Motor neuron (in vitro differentiated cells): ENCODE measurements at regions of chr7 and their contacts with region 1.

Region 1: GRCh38 chr7:78510580-78511188 is 712.1 kb downstream of the PHTF2 start:
- ATAC-seq: peak in 3 of 8 experiments; percentile 64 to 73 (median 69)
- H3K4me3 ChIP-seq: no peak overlapping the region
- H3K27ac ChIP-seq: no peak overlapping the region
- H3K4me1 ChIP-seq: peaks cover 8 to 14% of the 10 kb centered on the region in 2 donors

Region 2: DNA sequence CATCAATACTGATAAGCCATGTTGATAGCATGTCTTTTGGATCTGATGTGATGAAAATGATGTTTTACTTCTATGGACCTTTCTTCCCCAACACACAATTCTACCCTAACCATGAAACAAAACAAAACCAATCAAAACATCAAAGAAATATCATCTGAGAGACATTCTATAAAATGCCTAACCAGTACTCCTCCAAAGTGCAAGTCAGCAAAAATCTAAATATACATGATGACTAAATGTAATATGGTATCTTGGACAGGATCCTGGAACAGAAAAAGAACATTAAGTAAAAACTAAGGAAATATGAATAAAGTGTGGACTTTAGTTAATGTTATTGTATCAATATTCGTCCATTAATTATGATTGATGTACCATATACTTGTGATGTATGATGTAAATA is 317.6 kb after region 1 on chr7:
- in situ Hi-C with region 1: no loop called
- ATAC-seq: no peak
- H3K4me3 ChIP-seq: no peak overlapping the region
- H3K27ac ChIP-seq: no peak overlapping the region
- H3K4me1 ChIP-seq: no peaks in the 10 kb centered on the region

Region 3: GRCh38 chr7:78912781-78913180 is 402.1 kb after region 1 on chr7:
- in situ Hi-C with region 1: loop called in 1 of 9 experiments (anchors 10 kb)
- ATAC-seq: no peak
- H3K4me3 ChIP-seq: no peak overlapping the region
- H3K27ac ChIP-seq: no peak overlapping the region
- H3K4me1 ChIP-seq: no peaks in the 10 kb centered on the region